ENCODE measurements at regions of chr4 and their contacts with region 1.

Region 1: GRCh38 chr4:103099691-103100392 is at the start of gene BDH2:
- DNase-seq: peak in 7 of 9 donors; percentile 72 to 86 (median 83)
- ATAC-seq: peak; percentile 100
- H3K4me3 ChIP-seq: peak within 1 kb of the TSS; percentile 62
- H3K4me3 Mint-ChIP-seq: peak within 1 kb of the TSS; percentile 88 to 100 (median 94)
- H3K27ac ChIP-seq: peak within 1 kb of the TSS; percentile 69
- H3K27ac Mint-ChIP-seq: peak within 1 kb of the TSS; percentile 81 to 95 (median 92)
- H3K4me1 ChIP-seq: peaks cover 4 to 11% of the 10 kb centered on the region in 2 donors
- H3K4me1 Mint-ChIP-seq: peaks cover 22 to 45% (median 34%) of the 10 kb centered on the region in 7 donors
- H3K27me3 ChIP-seq: no peaks in the 10 kb centered on the region
- H3K27me3 Mint-ChIP-seq: no peaks in the 10 kb centered on the region
- total RNA-seq, gene BDH2: 8.4 to 21.9 (median 18.5) TPM

Region 2: GRCh38 chr4:101169044-101170014 is 1930.5 kb before region 1 on chr4:
- CTCF ChIA-PET with region 1: no interaction called
- POLR2A ChIA-PET with region 1: no interaction called
- intact Hi-C with region 1: loop called in 1 of 2 experiments (anchors 10 kb)
- DNase-seq: peak; percentile 9 to 64 (median 54)
- ATAC-seq: peak; percentile 96
- H3K4me3 ChIP-seq: no peak overlapping the region
- H3K4me3 Mint-ChIP-seq: no peak overlapping the region
- H3K27ac ChIP-seq: no peak overlapping the region
- H3K27ac Mint-ChIP-seq: no peak overlapping the region
- H3K4me1 ChIP-seq: no peaks in the 10 kb centered on the region
- H3K4me1 Mint-ChIP-seq: peaks cover 0 to 6% (median 3%) of the 10 kb centered on the region in 7 donors
- H3K27me3 ChIP-seq: no peaks in the 10 kb centered on the region
- H3K27me3 Mint-ChIP-seq: no peaks in the 10 kb centered on the region

Region 3: DNA sequence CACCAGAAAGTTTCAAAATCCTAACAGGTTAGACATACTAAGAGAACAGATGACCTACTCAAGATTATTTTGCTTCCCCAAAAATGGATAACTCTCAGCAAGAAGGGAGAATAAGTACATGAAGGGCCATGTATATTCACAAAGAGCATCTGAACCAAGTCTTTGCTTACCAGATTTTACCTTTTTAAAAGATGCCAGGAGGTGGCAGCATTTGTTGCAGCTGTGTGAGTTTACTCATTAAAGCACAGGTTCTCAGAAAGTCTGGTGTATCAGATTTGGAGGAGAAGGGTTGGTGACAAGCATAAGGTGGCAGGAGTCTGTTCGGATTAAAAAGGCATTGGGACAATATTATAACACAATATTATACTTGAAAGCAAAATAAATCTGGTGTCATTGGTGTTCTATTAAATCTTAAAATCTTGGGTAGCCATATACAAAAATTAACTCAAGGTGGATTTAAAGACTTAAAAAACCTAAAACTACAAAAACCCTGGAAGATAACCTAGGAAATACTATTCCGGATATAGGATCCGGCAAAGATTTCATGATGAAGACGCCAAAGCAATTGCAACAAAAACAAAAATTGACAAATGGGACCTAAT is 650.0 kb before region 1 on chr4:
- CTCF ChIA-PET with region 1: no interaction called
- POLR2A ChIA-PET with region 1: no interaction called
- intact Hi-C with region 1: loop called (anchors 2 kb)
- DNase-seq: peak in 7 of 9 donors; percentile 52 to 78 (median 71)
- ATAC-seq: peak; percentile 85
- H3K4me3 ChIP-seq: no peak overlapping the region
- H3K4me3 Mint-ChIP-seq: no peak overlapping the region
- H3K27ac ChIP-seq: no peak overlapping the region
- H3K27ac Mint-ChIP-seq: peak overlapping the region in 2 of 9 donors; percentile 16 to 56
- H3K4me1 ChIP-seq: no peaks in the 10 kb centered on the region
- H3K4me1 Mint-ChIP-seq: peaks cover 2 to 48% (median 9%) of the 10 kb centered on the region in 7 donors
- H3K27me3 ChIP-seq: no peaks in the 10 kb centered on the region
- H3K27me3 Mint-ChIP-seq: peaks cover 0 to 5% (median 0%) of the 10 kb centered on the region in 5 donors

Region 4: DNA sequence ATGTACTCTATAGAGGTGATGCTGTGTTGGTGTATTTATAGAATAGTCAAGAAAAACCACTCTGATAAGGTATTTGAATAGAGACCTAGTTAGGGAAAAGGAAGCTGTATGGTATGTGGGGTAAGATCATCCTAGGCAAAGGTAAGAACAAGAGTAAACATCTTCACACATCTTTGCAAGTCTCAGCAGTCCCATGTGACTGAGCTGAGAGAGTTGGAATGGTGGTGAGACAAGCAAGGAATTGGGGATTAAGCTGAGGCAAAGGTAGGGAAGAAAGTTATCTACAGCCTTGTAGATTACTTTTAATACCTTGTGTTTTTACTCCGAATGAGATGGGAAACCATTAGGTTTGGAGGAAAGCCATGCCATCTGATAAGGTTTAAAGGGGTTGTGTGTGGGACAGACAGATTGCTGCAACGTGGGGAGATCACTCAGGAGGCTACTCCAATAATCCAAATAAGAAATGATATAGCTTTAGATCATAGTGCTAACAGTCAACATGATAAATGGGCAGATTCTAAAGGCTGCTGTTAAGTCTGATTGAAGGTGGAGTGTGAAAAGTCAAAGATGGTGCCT is 307.4 kb before region 1 on chr4:
- CTCF ChIA-PET with region 1: no interaction called
- POLR2A ChIA-PET with region 1: no interaction called
- intact Hi-C with region 1: loop called in 1 of 2 experiments (anchors 10 kb)
- DNase-seq: no peak
- ATAC-seq: peak; percentile 41
- H3K4me3 ChIP-seq: no peak overlapping the region
- H3K4me3 Mint-ChIP-seq: no peak overlapping the region
- H3K27ac ChIP-seq: no peak overlapping the region
- H3K27ac Mint-ChIP-seq: peak overlapping the region in 6 of 9 donors; percentile 6 to 48 (median 28)
- H3K4me1 ChIP-seq: no peaks in the 10 kb centered on the region
- H3K4me1 Mint-ChIP-seq: peaks cover 8 to 27% (median 19%) of the 10 kb centered on the region in 7 donors
- H3K27me3 ChIP-seq: no peaks in the 10 kb centered on the region
- H3K27me3 Mint-ChIP-seq: no peaks in the 10 kb centered on the region

Region 5: DNA sequence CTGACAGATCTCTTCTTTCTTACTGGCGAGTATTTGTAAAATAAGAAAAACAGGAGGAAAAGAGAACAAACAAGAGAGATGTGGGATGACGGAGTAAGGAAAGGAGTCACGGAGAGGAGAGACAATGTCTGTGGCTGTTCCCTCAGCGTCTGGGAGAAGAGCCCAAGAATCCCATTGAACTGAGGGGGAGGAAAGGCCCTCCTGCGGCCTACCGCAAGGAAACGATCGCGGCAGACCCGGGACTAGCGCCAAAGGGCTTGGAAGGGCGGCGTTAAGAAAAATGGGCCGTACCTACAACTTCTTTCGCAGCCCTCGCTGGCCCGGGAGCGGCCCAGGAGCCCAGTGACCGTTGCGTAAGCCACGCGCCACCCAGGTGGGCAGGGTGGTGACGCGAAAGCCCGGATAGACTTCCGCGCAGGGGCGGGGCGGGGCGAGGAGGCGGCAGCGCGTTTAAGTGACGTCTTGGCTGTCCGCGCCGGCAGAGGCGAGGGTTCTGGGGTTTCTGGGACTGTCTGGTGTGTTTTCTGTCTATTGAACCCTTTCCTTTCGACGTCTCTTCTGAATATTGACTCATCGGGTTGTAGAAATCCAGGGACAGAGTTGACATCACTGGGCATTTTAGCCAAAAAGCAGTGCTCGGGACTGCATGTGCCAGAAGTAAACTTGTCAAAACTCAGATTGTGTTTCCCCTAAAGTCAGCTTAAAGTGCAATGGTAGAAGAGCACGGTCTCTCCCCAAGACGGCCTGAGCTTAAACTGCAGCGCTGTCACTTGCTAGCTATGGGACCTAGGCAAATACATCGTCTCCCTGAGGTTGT is 80.3 kb before region 1 on chr4 and contains the start of gene SLC9B1:
- CTCF ChIA-PET with region 1: no interaction called
- POLR2A ChIA-PET with region 1: interaction called, 3 read pairs
- intact Hi-C with region 1: loop called (anchors 1 kb)
- DNase-seq: peak; percentile 87 to 95 (median 92)
- ATAC-seq: peak; percentile 98
- H3K4me3 ChIP-seq: peak within 1 kb of the TSS; percentile 48
- H3K4me3 Mint-ChIP-seq: peak within 1 kb of the TSS; percentile 84 to 98 (median 93)
- H3K27ac ChIP-seq: peak within 1 kb of the TSS; percentile 80
- H3K27ac Mint-ChIP-seq: peak within 1 kb of the TSS in 6 of 9 donors; percentile 96 to 99 (median 98)
- H3K4me1 ChIP-seq: peaks cover 13 to 14% of the 10 kb centered on the region in 2 donors
- H3K4me1 Mint-ChIP-seq: peaks cover 0 to 29% (median 20%) of the 10 kb centered on the region in 7 donors
- H3K27me3 ChIP-seq: no peaks in the 10 kb centered on the region
- H3K27me3 Mint-ChIP-seq: no peaks in the 10 kb centered on the region
- total RNA-seq, gene SLC9B1: 1.4 to 7.2 (median 3.9) TPM

Region 6: GRCh38 chr4:103198111-103198765 is 98.4 kb after region 1 on chr4 and contains the start of gene CENPE:
- CTCF ChIA-PET with region 1: no interaction called
- POLR2A ChIA-PET with region 1: no interaction called
- intact Hi-C with region 1: loop called in 1 of 2 experiments (anchors 1 kb)
- DNase-seq: peak; percentile 77 to 90 (median 87)
- ATAC-seq: peak; percentile 93
- H3K4me3 ChIP-seq: peak within 1 kb of the TSS; percentile 95
- H3K4me3 Mint-ChIP-seq: peak within 1 kb of the TSS; percentile 81 to 99 (median 96)
- H3K27ac ChIP-seq: peak within 1 kb of the TSS; percentile 91
- H3K27ac Mint-ChIP-seq: peak within 1 kb of the TSS; percentile 87 to 100 (median 99)
- H3K4me1 ChIP-seq: peaks cover 0 to 6% of the 10 kb centered on the region in 2 donors
- H3K4me1 Mint-ChIP-seq: peaks cover 6 to 29% (median 10%) of the 10 kb centered on the region in 7 donors
- H3K27me3 ChIP-seq: no peaks in the 10 kb centered on the region
- H3K27me3 Mint-ChIP-seq: peaks cover 0 to 21% (median 7%) of the 10 kb centered on the region in 5 donors
- total RNA-seq, gene CENPE: 1.1 to 35.8 (median 1.5) TPM